GM10248 (cell line): ENCODE measurements at regions of chr5 and their contacts with region 1.

Region 1: GRCh38 chr5:81425569-81425968 is 31.6 kb upstream of the ACOT12 start:
- DNase-seq: peak; percentile 23
- CTCF ChIP-seq: peak; percentile 40

Region 2: GRCh38 chr5:81105261-81105877 is 320.2 kb before region 1 on chr5:
- CTCF ChIA-PET with region 1: no interaction called
- POLR2A ChIA-PET with region 1: no interaction called
- DNase-seq: no peak
- CTCF ChIP-seq: no peak

Region 3: DNA sequence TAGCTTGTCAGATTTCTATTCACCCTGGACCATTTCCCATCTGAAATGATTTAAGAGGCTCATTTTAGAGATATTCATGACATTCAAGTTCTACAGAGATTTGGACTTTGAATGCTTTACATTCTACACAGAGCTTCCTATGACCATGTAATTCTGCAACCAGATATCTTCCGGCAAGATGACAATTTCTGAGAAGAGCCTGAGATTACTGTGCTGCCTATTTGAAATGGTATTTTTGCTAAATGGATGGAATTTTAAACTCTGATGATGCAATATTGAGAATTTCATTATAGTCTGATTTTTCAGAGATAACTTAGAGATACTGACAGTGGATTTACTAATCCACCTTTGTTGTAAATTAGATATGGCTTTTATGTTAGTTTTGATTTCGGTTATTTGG is 15.7 kb before region 1 on chr5:
- CTCF ChIA-PET with region 1: interaction called, 12 read pairs
- POLR2A ChIA-PET with region 1: no interaction called
- DNase-seq: no peak
- CTCF ChIP-seq: no peak